Motor neuron (in vitro differentiated cells): ENCODE measurements at regions of chr15 and their contacts with region 1.

Region 1: DNA sequence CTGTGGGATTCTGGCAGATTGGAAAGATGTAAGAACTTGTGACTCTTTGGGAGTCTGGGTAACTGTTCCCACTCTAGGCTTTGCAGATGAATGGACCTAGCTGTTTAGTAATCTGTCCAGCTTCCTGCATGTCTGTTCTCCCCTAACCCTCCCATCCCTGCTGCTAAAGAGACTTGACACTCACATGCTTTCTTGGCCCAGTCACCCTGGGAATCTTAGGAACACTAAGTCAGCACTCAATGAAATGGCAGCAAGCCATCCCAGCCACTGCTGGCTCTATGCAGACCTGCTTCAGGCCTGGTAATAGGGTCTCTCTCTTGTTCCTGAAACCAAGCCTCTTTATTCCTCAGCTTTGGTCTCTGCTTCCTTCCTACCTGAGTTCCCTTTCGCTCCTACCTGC is 63.7 kb upstream of the THSD4 start:
- ATAC-seq: no peak
- H3K4me3 ChIP-seq: no peak overlapping the region
- H3K27ac ChIP-seq: no peak overlapping the region
- H3K4me1 ChIP-seq: no peaks in the 10 kb centered on the region

Region 2: DNA sequence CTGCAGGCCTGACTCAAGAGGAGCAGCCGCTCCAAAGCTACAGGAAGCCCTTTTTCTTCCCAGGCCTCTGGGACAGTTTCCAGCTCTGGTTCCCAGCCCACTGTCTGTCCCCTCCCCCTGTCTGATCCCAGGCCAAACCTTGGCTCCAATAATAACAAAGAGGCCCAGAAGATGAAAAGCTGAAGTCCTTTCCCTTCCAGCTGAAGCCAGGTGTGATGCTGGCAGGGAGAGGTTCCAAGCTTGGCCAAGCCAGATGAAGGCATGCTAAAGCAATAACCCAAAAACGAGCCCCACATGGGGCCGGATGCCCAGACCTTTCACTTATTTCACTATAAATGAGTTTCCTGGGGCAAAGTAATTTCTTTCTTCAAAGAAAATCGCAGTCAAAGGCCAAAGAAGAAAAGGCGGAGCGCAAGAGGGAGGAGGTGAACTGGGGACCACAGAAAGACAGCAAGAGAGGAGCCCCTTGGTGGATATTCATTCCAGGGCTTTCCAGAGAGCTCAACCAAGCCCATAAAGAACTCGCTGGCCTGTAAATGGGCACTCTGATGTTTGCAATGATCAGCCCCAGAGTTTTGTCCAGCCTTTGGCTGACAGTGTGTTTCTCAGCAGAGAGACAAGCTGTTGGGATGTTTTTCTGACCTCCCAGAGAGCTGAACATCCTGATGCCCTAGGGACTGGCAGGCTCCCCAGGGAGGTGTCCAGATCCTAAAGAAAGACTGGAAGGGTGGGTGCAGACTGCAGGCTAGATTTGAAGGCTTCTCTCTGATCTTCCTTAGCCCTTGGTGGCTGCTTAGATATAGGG is 445.7 kb before region 1 on chr15:
- in situ Hi-C with region 1: loop called in 1 of 9 experiments (anchors 25 kb)
- ATAC-seq: peak in 1 of 8 experiments; percentile 19
- H3K4me3 ChIP-seq: no peak overlapping the region
- H3K27ac ChIP-seq: no peak overlapping the region
- H3K4me1 ChIP-seq: peaks cover 10 to 12% of the 10 kb centered on the region in 2 donors

Region 3: DNA sequence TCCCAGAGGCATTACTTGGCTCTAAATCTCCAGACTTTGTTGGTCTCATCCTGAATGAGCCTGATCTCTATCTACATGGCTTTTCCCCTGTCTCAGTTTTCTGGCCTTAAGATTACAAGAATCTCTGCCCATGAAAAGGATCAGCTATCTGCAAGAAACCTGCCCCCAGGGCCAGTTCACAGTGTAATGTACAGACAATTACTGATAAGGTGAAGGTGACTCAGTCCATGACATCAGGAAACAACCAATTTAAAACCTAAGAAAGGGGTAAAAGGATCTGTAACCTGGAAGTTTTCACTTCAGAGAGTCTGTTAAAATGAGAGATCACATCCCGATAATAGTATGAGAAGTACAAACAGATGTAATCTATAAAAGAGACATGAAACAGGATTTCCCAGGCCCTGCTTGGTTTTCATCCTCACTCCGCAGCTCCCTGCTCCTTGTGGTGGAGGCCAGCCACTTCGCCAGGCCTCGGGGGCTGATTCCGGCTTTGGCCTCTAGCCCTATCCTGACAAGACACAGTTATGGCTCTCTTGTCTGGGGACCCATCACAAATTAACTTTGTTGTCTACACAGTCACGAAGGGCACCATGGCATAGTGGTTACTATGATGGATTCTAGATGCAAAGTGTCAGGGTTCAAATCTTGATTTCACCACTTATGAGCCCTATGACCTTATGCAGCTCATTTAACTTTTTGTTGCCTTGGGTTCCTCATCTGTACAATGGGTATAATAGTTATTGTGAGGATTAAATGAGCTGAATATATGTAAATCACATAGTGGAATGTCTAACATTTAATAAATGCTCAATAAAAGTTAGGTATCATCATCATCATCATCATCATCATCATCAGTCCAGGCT is 200.7 kb after region 1 on chr15:
- in situ Hi-C with region 1: no loop called
- ATAC-seq: no peak
- H3K4me3 ChIP-seq: no peak overlapping the region
- H3K27ac ChIP-seq: no peak overlapping the region
- H3K4me1 ChIP-seq: peaks cover 2 to 14% of the 10 kb centered on the region in 2 donors